ENCODE measurements at regions of chr1 and their contacts with region 1.

Region 1: GRCh38 chr1:99481391-99481996 is 164.4 kb upstream of the PALMD start:
- H3K4me3 Mint-ChIP-seq: no peak overlapping the region
- H3K27ac Mint-ChIP-seq: no peak overlapping the region
- H3K4me1 Mint-ChIP-seq: no peaks in the 10 kb centered on the region
- H3K27me3 Mint-ChIP-seq: no peaks in the 10 kb centered on the region

Region 2: DNA sequence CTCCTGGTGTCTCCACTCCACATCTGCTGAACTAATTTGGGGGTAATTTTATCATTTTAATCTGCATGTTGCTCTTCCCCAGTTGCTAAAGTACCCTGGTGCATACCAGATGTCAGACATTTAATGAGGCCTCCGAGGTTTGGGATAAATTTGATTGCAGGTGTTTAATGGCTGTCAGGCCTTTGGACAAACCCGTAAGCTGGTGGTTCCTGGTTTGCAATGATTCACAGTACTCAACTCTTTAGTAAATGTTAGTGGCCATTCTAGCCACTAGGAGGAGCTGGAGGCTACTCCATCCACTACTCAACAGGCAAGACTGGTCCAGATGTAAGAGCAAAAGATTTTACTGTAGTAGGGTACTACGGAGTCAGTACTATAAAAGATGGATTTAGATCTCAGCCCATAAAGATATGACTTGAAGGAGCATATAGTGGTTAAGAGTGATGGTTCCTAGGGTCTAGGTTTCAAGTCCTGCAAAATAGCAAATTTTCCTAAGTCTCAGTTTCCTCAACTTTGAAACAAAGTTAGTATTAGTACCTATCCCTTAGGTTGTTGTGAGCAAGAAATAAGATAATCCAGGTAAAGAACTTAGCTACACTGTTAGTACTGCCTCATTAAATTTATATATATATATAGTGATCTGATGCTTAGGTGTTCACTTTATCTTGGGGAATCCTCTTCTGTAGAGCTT is 687.2 kb before region 1 on chr1:
- intact Hi-C with region 1: loop called (anchors 5 kb)
- H3K4me3 Mint-ChIP-seq: no peak overlapping the region
- H3K27ac Mint-ChIP-seq: no peak overlapping the region
- H3K4me1 Mint-ChIP-seq: no peaks in the 10 kb centered on the region
- H3K27me3 Mint-ChIP-seq: peaks cover 2% of the 10 kb centered on the region

Region 3: DNA sequence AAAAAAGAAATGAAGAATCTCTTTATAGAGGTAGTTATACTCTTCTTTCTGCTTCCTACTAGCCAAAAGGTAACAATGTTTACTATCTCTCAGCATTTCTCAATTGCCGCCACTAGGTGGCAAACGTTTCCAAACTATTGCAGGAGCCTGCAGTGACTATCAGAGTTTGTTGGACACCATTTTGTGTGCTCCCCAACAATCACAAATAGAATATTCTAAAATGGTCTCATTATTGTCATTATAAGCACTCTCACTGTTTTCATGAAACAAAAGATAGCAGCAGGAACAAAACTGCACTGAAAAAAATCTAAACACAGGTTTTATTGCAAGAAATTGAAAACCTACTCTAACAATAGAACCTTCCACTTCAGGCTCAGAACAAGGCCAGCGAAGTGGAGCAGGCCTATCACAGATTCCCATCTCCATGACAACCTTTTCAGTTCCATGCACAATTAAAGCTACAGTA is 301.1 kb before region 1 on chr1:
- intact Hi-C with region 1: loop called (anchors 1 kb)
- H3K4me3 Mint-ChIP-seq: no peak overlapping the region
- H3K27ac Mint-ChIP-seq: no peak overlapping the region
- H3K4me1 Mint-ChIP-seq: no peaks in the 10 kb centered on the region
- H3K27me3 Mint-ChIP-seq: peaks cover 1% of the 10 kb centered on the region

Region 4: GRCh38 chr1:99397029-99397428 is 84.5 kb before region 1 on chr1:
- intact Hi-C with region 1: no loop called
- H3K4me3 Mint-ChIP-seq: no peak overlapping the region
- H3K27ac Mint-ChIP-seq: no peak overlapping the region
- H3K4me1 Mint-ChIP-seq: no peaks in the 10 kb centered on the region
- H3K27me3 Mint-ChIP-seq: peaks cover 1% of the 10 kb centered on the region

Region 5: DNA sequence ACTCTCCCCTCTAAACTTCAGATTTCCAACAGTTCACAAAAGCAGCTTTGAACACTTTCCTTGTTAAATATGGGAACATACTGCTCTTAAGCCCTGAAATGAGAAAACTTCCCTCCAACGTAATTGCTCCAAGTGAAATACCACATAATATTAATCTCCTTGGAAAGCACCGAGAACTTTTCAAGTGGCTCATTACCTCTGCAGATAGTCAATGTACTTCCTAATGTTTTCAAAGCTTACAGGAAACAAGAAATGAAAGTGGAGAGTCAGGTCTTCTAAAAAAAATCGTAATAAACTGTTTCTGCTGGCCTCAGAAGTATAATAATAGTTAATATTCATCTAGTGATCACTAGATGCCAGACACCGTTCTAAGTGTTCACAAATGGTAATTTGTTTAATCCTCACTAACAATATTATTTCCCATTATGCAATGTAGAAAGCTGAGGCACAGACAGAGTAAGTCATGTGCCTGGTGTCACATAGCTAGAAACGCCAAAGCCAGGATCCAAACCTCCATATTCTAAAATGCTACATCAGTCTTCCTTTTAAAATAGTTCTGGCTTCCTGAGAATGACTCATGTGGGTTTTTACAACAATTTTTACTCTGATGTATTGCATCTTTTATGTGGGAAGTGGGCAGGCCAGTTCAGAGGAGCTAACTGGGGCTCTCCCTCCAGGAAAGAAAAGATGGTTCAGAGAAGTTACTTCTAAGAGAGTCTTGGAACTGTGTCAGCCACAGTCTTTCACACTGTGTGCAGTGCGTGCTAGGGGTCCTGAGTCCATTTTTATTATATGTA is 40.0 kb before region 1 on chr1:
- intact Hi-C with region 1: no loop called
- H3K4me3 Mint-ChIP-seq: no peak overlapping the region
- H3K27ac Mint-ChIP-seq: peak overlapping the region; percentile 32
- H3K4me1 Mint-ChIP-seq: peaks cover 9% of the 10 kb centered on the region
- H3K27me3 Mint-ChIP-seq: no peaks in the 10 kb centered on the region

Region 6: DNA sequence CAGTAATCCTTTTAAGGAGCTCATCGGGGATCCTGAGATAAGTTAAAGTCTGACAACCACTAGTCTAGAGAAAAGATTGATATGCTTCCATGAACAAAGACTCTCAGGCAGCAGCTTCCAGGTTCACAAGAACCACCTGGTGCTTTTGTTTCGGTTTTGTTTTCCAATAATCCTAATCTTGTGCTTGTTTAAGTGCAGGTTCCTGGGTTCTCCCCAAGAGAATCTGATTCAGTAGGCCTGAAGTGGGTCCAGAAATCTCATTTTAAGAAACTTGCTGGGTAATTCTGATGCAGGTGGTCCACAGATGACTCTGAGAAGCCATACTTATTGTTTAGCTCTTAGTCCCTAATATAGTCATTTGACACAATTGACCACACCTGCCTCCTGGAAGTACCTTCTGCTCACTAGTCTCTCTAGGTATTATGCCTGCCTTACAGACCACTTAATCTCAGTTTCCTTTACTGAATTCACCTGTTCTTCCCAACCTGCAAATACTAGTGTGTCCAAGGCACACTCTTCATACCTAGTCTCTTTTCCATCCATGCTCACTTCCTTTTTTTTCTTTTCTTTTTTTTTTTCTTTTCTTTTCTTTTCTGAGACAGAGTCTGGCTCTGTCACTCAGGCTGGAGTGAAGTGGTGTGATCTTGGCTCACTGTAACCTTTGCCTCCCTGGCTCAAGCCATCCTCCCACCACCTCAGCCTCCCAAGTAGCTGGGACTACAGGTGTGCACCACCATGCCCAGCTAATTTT is 305.4 kb after region 1 on chr1:
- intact Hi-C with region 1: no loop called
- H3K4me3 Mint-ChIP-seq: no peak overlapping the region
- H3K27ac Mint-ChIP-seq: no peak overlapping the region
- H3K4me1 Mint-ChIP-seq: no peaks in the 10 kb centered on the region
- H3K27me3 Mint-ChIP-seq: peaks cover 13% of the 10 kb centered on the region

Region 7: DNA sequence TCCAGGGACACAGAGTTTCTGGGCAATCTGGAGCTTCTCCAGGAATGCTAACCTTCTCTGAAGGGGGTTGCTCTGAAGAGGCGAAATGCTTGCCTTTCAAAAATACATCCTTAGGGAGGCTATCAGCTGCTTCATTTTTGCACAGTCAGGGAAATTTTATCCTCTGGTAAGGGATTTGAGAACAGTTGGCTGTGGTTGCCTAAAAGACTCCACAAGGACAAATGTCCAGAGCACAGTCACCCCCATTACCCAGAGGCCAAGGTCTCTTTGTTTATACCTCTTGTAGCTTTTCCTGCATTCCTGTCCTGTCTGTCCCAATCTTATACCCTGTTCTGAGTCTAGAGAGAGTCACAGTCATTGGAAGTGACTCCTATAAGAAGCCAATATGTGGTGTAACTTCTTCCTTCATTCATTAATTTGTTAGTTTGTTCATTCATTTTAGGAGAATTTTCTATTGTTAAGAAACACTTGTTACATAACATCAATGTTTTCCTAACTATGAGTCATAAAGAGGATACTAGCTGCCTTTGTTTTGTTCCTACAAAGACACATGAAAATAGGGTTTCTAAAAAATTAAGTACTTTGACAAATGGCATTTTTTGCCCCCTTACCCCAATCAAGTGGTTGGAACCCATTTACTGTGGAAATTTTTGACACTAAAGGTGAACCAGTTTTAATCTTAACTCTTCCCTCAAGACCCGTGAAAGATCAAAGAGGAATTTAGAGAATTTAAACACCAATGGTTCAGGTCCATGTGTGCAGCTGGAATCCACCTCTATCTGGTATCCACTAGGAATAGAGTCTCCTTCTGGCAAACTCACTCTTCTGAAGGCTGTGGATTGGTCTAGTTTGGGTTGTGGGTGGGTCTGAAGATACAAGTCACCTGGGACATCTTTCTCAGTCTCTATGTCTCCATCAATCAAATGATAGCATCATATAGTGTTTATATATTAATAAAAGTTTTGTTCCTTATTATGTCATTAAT is 1103.6 kb after region 1 on chr1:
- intact Hi-C with region 1: no loop called
- H3K4me3 Mint-ChIP-seq: no peak overlapping the region
- H3K27ac Mint-ChIP-seq: no peak overlapping the region
- H3K4me1 Mint-ChIP-seq: peaks cover 15% of the 10 kb centered on the region
- H3K27me3 Mint-ChIP-seq: no peaks in the 10 kb centered on the region

Measured in dendritic cell treated with granulocyte-macrophage colony-stimulating factor and Interleukin-4, amounts not matched to agents 40 ng/mL and 50 ng/mL, for 4 days (primary cell).